ENCODE measurements at regions of chr1 and their contacts with region 1.

Region 1: DNA sequence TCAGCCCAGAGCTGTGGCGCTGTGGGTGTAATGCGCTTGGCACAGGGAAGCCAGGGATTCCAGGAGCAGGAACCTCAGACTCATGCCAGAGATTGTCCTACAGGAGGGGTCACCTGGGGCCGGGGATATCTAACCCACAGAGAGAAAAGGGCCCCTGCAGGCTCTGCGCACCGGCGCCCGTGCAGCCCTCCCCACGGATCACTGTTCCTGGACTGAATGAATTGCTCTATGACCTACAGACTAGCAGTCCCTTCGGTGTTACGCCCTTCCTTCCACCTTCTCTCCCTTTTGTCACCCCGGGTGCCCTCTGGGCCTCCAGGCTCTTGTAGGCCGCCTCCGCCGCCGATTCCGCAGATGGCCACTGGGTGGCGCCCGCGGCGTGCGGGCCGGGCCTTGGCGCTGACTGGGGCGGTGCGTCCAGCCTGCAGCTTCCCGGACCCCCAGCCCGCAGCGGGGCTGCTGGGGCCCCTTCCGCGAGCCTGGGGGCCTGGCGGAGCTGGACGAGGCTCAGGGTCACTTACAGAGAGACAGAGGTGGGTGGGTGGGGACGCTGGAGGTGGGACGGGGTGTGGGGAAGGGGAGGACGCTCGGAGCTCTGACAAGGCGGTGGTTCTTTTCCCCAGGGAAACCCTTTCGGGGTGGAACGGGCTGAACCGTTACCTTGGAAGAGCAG is 101.3 kb downstream of the IER5 start:
- DNase-seq: peak; percentile 79
- ATAC-seq: peak; percentile 94
- H3K4me3 Mint-ChIP-seq: no peak overlapping the region
- H3K27ac Mint-ChIP-seq: no peak overlapping the region
- H3K4me1 Mint-ChIP-seq: no peaks in the 10 kb centered on the region
- H3K27me3 Mint-ChIP-seq: peaks cover 2% of the 10 kb centered on the region
- CTCF ChIP-seq: peak; percentile 96

Region 2: DNA sequence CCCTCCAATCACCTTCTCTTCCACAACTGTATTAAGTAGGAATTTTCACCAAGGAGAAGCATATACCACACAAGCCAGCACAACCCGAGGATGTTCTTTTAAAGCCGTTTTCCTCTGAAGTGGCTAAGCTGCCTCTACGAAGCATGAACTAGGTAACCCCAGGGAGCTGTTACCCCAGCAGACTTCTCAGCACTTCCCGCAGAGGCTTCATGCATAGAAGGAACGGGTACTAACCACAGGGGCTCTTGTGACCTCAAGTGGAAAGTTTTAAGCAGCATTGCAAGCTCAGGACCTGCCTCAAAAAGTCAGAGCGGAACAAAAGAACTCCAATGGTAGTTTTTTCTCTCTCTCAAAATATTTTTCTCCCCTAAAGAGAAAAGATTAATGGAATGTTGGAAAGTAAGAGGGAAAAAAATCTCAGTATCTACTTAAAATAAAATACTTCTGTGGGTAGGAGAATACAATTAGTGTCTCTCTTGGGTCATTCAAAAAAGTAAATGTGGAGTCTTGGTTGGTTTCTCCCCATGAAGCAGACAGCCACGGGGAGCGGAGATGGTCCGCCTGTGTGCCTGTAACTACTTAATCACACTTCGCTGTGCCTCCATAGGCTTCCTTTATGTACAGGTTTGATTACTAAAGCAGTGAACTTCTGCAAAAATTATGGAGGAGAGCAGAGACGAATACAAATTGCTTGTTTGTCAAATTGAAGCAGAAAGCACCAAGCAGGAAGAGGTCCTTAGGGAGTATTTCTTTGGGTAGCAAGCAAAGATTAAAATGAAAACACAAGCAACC is 208.0 kb before region 1 on chr1:
- CTCF ChIA-PET with region 1: no interaction called
- POLR2A ChIA-PET with region 1: no interaction called
- intact Hi-C with region 1: no loop called
- DNase-seq: peak; percentile 83
- ATAC-seq: peak; percentile 94
- H3K4me3 Mint-ChIP-seq: peak overlapping the region; percentile 50
- H3K27ac Mint-ChIP-seq: peak overlapping the region; percentile 90
- H3K4me1 Mint-ChIP-seq: peaks cover 36% of the 10 kb centered on the region
- H3K27me3 Mint-ChIP-seq: no peaks in the 10 kb centered on the region
- CTCF ChIP-seq: no peak

Region 3: DNA sequence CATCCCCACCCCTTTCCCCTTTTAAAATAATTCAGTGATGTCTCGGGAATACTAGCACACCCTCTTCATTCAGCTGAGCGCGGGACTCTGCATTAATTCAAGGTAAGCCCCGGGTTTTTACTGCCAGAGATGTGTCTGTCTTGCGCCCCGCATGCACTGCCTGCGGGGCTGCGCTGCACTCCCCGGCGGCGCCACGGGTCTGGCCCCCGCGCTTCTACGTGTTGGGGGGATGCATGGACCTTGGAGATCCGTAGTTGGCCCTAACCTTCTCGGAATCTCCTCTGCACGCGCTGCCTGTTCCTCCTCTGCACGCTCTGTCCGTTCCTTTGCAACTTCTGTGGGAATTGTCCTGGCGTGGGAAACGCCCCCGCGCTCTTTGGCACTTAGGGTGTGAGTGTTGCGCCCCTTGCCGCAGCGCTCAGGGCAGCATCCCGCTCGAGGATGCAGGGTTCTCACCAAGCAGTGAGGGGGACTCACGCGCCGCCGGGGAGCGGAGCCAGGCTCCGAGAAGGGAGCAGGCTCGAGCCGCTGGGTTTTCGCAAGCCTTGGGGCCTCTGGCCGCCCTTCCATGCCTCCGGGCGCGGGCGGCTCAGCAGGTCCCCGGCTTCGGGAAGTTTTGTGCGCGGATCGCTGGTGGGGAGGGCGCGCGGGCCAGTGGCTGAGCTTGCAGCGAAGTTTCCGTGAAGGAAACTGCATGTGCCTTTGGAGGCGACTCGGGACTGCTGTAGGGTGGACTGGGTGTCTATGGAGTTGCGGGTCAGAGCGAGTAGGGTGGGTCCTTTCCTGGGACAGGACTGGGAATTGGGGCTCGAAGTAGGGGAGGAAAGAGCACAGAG is 128.4 kb after region 1 on chr1:
- CTCF ChIA-PET with region 1: no interaction called
- POLR2A ChIA-PET with region 1: no interaction called
- intact Hi-C with region 1: loop called (anchors 10 kb)
- DNase-seq: peak; percentile 20
- ATAC-seq: peak; percentile 27
- H3K4me3 Mint-ChIP-seq: peak overlapping the region; percentile 49
- H3K27ac Mint-ChIP-seq: no peak overlapping the region
- H3K4me1 Mint-ChIP-seq: peaks cover 22% of the 10 kb centered on the region
- H3K27me3 Mint-ChIP-seq: peaks cover 53% of the 10 kb centered on the region
- CTCF ChIP-seq: no peak

Region 4: DNA sequence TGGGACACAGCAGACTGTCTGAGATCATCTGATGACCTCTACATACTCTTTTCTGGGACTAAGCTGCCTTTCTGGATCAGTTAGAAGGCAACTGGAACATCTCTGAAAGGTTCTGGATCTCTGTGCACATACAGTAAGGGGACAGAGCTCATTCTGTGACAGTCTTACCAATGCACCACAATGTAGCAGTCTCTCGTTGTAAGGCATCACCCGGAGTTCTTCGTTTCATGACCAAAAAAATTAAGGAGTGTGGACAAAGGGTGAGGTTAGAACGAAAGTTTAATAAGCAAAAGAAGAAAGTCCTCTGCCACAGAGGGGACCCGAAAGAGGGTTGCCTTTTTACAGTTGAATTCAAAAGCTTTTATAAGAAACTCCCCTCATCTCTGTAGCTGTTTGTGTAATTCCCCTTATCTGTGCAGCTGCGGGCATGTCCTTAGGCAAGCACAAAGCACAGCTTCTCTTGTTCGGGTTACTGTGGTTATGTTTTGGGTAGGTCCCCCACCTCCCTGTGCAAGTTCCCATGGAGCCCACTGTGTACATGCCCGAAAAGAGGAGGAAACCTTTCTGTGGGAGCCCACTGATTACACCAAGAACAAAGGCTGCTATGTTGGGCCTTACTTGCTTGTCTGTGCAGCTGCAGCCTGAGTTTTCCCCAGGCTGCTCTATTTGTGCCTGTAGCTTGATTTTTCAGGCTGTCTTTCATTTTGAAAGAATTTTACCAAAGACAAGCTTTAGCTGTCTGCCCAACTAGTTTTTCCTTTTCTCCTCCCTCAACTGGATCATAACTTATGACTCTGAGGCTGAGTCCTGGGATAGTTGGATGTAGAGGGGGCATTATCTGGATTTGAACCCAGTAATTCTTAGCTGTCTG is 240.4 kb after region 1 on chr1:
- CTCF ChIA-PET with region 1: interaction called, 62 read pairs
- POLR2A ChIA-PET with region 1: no interaction called
- intact Hi-C with region 1: loop called (anchors 1 kb)
- DNase-seq: no peak
- ATAC-seq: no peak
- H3K4me3 Mint-ChIP-seq: no peak overlapping the region
- H3K27ac Mint-ChIP-seq: no peak overlapping the region
- H3K4me1 Mint-ChIP-seq: no peaks in the 10 kb centered on the region
- H3K27me3 Mint-ChIP-seq: peaks cover 19% of the 10 kb centered on the region
- CTCF ChIP-seq: no peak